ENCODE measurements at regions of chr2 and their contacts with region 1.

Region 1: DNA sequence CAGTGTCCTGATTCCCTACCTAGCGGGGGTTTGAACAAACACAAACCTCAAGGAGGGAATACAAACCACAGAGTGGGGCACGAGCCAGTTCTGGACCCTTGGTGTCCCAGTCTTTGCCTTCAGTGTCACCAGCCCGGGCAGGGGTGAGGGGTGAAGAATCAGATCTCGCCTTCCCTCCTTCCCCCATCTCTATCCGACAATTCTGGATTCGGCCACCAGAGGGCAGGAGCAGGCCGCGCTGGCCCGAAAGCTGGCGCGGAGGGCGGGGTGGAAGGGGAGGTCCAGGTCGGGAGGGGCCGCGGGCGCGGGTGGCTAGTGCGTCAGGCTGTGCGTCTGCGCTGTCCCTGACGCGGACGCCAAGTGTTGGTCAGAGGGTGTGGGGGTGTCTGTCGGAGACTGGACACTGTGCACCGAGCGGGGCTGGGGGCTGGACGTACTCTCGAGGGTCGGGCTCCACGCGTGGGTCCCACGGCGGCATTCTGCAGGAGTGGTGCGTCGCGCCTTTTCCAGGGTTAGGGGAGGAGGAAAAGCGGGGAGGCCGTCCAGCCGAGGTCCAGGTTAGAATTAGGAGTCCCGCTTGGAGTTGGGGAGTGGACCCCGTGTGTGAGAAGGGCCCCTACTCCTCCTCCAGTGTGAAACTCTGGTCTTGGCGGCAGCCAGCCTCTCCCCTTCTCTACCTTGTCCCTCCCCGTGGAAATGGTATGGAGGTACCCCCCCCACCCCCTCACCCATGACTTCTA is 2.9 kb upstream of the CRYBA2 start:
- DNase-seq: peak; percentile 70
- H3K4me3 ChIP-seq: peak overlapping the region; percentile 26 to 54 (median 49)
- H3K27ac ChIP-seq: no peak overlapping the region
- H3K4me1 ChIP-seq: peaks cover 17% of the 10 kb centered on the region
- H3K27me3 ChIP-seq: peaks cover 6% of the 10 kb centered on the region
- CTCF ChIP-seq: peak; percentile 64 to 90

Region 2: GRCh38 chr2:218979846-218980734 is 16.1 kb before region 1 on chr2:
- CTCF ChIA-PET with region 1: interaction called, 4 read pairs
- dilution Hi-C with region 1: no loop called
- in situ Hi-C with region 1: no loop called
- intact Hi-C with region 1: loop called (anchors 1 kb)
- DNase-seq: peak; percentile 67
- H3K4me3 ChIP-seq: peak overlapping the region in 1 of 3 experiments; percentile 37
- H3K27ac ChIP-seq: no peak overlapping the region
- H3K4me1 ChIP-seq: peaks cover 15% of the 10 kb centered on the region
- H3K27me3 ChIP-seq: peaks cover 41% of the 10 kb centered on the region
- CTCF ChIP-seq: peak; percentile 79 to 86

Region 3: GRCh38 chr2:219331560-219332213 is 335.5 kb after region 1 on chr2:
- CTCF ChIA-PET with region 1: no interaction called
- dilution Hi-C with region 1: no loop called
- in situ Hi-C with region 1: no loop called
- intact Hi-C with region 1: no loop called
- DNase-seq: no peak
- H3K4me3 ChIP-seq: no peak overlapping the region
- H3K27ac ChIP-seq: no peak overlapping the region
- H3K4me1 ChIP-seq: no peaks in the 10 kb centered on the region
- H3K27me3 ChIP-seq: peaks cover 10% of the 10 kb centered on the region
- CTCF ChIP-seq: no peak